ENCODE measurements at regions of chr20 and their contacts with region 1.

Region 1: GRCh38 chr20:50189681-50190582 is 698 bp upstream of the CEBPB start:
- DNase-seq: peak; percentile 95

Region 2: GRCh38 chr20:50278674-50279531 is 89.0 kb after region 1 on chr20:
- intact Hi-C with region 1: loop called (anchors 5 kb)
- DNase-seq: no peak

Region 3: GRCh38 chr20:50379049-50379990 is 189.4 kb after region 1 on chr20:
- intact Hi-C with region 1: loop called (anchors 5 kb)
- DNase-seq: peak; percentile 89

Region 4: DNA sequence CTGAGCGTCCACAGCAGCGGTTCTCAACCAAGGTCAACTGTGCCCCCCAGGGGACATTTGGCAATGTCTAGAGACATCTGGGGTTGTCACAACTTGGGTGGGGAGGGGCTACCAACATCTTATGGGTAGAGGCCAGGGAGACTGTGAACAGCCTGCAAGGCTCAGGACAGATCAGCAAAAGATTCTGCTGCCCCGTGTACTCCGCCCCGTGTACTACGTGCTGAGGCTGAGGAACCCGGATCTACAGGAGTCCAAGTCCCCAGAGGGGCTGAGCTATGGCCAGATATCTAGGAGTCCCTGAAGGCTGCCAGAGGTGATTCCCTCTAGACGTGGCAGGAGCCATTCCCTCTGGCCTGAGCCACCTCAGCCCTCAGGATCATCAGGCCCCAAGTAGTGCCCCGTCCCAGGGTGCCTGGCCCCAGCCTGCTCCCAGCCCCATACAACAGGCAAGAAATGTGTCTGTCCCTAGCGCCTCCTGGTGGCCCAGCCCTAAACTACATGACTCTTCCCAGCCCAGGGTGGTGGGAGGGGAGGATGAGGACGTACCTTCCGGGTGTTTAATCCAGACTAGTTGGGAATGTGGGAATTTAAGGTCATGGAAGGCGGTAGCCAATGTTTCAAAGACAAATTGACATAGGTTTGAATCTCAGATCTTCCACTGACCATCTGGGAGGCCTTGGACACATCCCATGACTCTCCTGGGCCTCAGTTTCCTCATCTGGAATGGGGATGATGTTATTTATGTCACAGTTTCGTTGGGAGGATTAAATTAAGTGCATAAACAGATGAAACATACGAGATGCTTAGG is 270.7 kb after region 1 on chr20:
- intact Hi-C with region 1: loop called (anchors 1 kb)
- DNase-seq: peak; percentile 95

Region 5: DNA sequence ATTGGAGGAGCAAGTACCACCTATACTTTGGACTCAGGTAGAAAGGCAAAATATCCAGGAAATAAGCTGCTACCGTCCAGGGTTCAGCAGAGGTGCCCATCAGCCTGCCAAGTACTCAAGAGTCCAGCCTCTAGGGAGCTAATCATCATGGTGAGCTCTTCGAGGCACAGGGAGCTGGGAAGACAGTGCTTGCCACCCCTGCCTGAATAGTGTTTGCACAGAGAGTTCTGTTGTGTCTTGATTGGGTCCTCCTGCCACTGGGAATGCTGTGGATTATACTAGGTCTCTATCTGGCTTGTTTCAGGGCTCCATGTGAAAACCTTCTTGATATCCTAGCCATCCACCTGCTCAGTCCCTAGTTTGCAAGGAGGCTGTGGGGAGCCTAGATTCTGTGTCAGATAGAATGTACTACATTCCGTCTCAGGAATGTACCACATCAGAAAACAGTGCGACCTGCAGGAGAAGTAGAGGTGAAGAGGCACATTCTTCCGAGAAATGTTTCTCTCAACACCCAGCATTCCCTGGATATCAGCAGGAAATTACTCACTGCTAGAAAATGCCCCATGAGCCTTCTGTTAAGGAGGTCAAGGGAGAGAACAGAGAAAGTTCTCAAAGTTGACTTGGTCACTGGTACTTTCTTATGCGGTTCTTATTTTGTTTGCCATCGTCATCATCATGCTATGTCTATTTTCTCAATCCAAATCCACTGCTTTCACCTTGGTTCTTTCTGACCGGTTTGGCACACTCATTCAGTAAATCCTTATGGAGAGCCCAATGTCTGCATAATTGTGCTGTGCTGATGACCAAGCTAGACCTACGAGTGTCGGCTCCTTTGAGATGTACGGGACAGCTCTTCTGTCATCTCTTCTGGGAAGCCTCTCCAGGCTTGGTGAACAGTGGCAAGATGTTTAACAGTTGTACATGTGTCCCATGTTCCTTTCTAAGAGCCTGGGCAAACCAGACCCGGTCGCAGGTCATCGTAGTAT is 351.0 kb after region 1 on chr20:
- intact Hi-C with region 1: no loop called
- DNase-seq: no peak

Measured in cardiac septum (tissue), 1 donor.